Right ventricle myocardium inferior (tissue), 1 donor: ENCODE measurements at regions of chr10 and their contacts with region 1.

Region 1: GRCh38 chr10:34808801-34809745 is 6.0 kb downstream of the PARD3 start:
- DNase-seq: peak; percentile 70
- ATAC-seq: peak; percentile 59

Region 2: DNA sequence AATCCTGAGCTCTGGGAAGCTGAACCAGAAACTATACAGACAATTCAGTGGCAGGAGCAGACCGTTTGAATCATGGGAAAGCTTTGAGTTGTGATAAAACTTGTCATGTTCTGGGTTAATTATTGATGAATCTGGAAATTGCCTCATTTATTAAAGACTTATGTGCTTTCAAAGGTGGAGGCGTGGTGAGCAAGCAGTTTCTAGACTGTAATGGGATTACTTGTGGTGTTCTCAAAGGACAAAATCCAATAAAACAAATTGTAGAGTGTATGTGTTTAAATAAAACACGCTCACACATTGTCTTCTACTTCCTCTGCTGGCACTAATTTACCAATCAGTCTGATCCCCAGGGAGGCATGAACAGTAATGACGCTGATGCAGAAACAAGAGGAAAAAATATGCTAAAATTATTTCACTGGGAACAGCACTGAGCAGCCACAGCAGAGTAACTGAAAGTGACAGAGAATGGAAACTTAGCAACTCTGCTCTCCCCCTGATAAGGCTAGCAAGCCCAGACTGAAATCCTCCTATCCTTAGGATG is 19.0 kb before region 1 on chr10:
- intact Hi-C with region 1: loop called (anchors 2 kb)
- DNase-seq: no peak
- ATAC-seq: no peak